Head of caudate nucleus (tissue), 42 donors: ENCODE measurements at regions of chr17 and their contacts with region 1.

Region 1: GRCh38 chr17:1516388-1517161 is at the start of gene INPP5K:
- DNase-seq: peak; percentile 96 to 100 (median 99)

Region 2: DNA sequence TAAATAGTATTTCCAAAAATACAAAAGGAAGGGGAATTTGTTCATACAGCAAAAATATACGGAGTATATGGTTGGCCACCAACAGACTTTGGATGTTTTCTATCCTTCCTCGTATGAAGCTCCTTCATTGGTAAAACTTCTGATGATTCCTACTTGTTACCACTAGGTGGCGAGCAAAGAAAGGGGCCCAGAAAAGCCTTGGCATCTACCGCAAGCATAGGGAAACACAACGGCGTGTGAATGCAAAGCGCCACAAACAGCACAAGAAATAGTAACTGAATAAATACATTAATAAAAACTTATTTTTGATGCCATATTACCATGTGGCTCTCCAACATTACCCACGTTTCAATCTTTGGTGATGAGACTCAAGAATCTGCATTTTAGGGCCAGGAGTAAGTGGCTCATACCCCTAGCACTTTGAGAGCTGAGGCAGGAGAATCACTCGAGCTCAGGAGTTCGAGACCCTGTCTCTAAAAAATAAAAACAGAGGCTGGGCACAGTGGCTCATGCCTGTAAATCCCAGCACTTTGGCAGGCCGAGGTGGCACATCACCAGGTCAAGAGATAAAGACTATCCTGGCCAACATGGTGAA is 151.0 kb before region 1 on chr17:
- intact Hi-C with region 1: loop called (anchors 2 kb)
- DNase-seq: peak in 41 of 42 donors; percentile 25 to 86 (median 59)

Region 3: GRCh38 chr17:1399679-1400512 is 116.7 kb before region 1 on chr17 and contains the start of gene YWHAE:
- intact Hi-C with region 1: no loop called
- DNase-seq: peak; percentile 91 to 99 (median 97)